HepG2 (cell line): ENCODE measurements at regions of chr3 and their contacts with region 1.

Region 1: GRCh38 chr3:101803173-101803782 is 24.3 kb downstream of the NXPE3 start:
- DNase-seq: peak; percentile 74
- ATAC-seq: peak; percentile 98
- H3K4me3 ChIP-seq: no peak overlapping the region
- H3K27ac ChIP-seq: no peak overlapping the region
- H3K4me1 ChIP-seq: peaks cover 27% of the 10 kb centered on the region
- H3K27me3 ChIP-seq: no peaks in the 10 kb centered on the region
- CTCF ChIP-seq: peak; percentile 73
- EP300 ChIP-seq: no peak
- POLR2A ChIP-seq: no peak
- RAD21 ChIP-seq: peak; percentile 44; the same call in 1 of the 2 replicates

Region 2: GRCh38 chr3:101695779-101696372 is 107.4 kb before region 1 on chr3:
- CTCF ChIA-PET with region 1: no interaction called
- POLR2A ChIA-PET with region 1: no interaction called
- in situ Hi-C with region 1: no loop called
- intact Hi-C with region 1: loop called (anchors 1 kb)
- DNase-seq: peak; percentile 67
- ATAC-seq: no peak
- H3K4me3 ChIP-seq: no peak overlapping the region
- H3K27ac ChIP-seq: no peak overlapping the region
- H3K4me1 ChIP-seq: 0 out of 2 replicates have a peak, but pooled peaks cover 5% of the 10 kb centered on the region
- H3K27me3 ChIP-seq: no peaks in the 10 kb centered on the region
- CTCF ChIP-seq: peak; percentile 61
- EP300 ChIP-seq: no peak
- POLR2A ChIP-seq: no peak
- RAD21 ChIP-seq: no peak

Region 3: GRCh38 chr3:101791778-101792177 is 11.5 kb before region 1 on chr3:
- CTCF ChIA-PET with region 1: no interaction called
- POLR2A ChIA-PET with region 1: no interaction called
- in situ Hi-C with region 1: no loop called
- intact Hi-C with region 1: no loop called
- DNase-seq: no peak
- ATAC-seq: no peak
- H3K4me3 ChIP-seq: no peak overlapping the region
- H3K27ac ChIP-seq: no peak overlapping the region
- H3K4me1 ChIP-seq: peaks cover 5% of the 10 kb centered on the region; the same call in 1 of the 2 replicates
- H3K27me3 ChIP-seq: no peaks in the 10 kb centered on the region
- CTCF ChIP-seq: no peak
- EP300 ChIP-seq: no peak
- POLR2A ChIP-seq: no peak
- RAD21 ChIP-seq: no peak

Region 4: GRCh38 chr3:101898752-101899169 is 95.5 kb after region 1 on chr3:
- CTCF ChIA-PET with region 1: no interaction called
- POLR2A ChIA-PET with region 1: no interaction called
- in situ Hi-C with region 1: no loop called
- intact Hi-C with region 1: no loop called
- DNase-seq: no peak
- ATAC-seq: no peak
- H3K4me3 ChIP-seq: no peak overlapping the region
- H3K27ac ChIP-seq: no peak overlapping the region
- H3K4me1 ChIP-seq: no peaks in the 10 kb centered on the region
- H3K27me3 ChIP-seq: no peaks in the 10 kb centered on the region
- CTCF ChIP-seq: no peak
- EP300 ChIP-seq: no peak
- POLR2A ChIP-seq: no peak
- RAD21 ChIP-seq: no peak

Region 5: GRCh38 chr3:101995371-101996046 is 192.2 kb after region 1 on chr3:
- CTCF ChIA-PET with region 1: no interaction called
- POLR2A ChIA-PET with region 1: no interaction called
- in situ Hi-C with region 1: no loop called
- intact Hi-C with region 1: loop called (anchors 10 kb)
- DNase-seq: no peak
- ATAC-seq: no peak
- H3K4me3 ChIP-seq: no peak overlapping the region
- H3K27ac ChIP-seq: no peak overlapping the region
- H3K4me1 ChIP-seq: no peaks in the 10 kb centered on the region
- H3K27me3 ChIP-seq: no peaks in the 10 kb centered on the region
- CTCF ChIP-seq: no peak
- EP300 ChIP-seq: no peak
- POLR2A ChIP-seq: no peak
- RAD21 ChIP-seq: no peak

Region 6: GRCh38 chr3:102529452-102529851 is 726.2 kb after region 1 on chr3:
- CTCF ChIA-PET with region 1: no interaction called
- POLR2A ChIA-PET with region 1: no interaction called
- in situ Hi-C with region 1: loop called (anchors 10 kb)
- intact Hi-C with region 1: loop called (anchors 2 kb)
- DNase-seq: no peak
- ATAC-seq: peak; percentile 62; the same call in 2 of the 3 replicates
- H3K4me3 ChIP-seq: no peak overlapping the region
- H3K27ac ChIP-seq: no peak overlapping the region
- H3K4me1 ChIP-seq: no peaks in the 10 kb centered on the region
- H3K27me3 ChIP-seq: no peaks in the 10 kb centered on the region
- CTCF ChIP-seq: 0 out of 2 replicates have a peak, but pooled peaks have one; percentile 19
- EP300 ChIP-seq: no peak
- POLR2A ChIP-seq: no peak
- RAD21 ChIP-seq: no peak

Region 7: GRCh38 chr3:102536456-102536855 is 733.2 kb after region 1 on chr3:
- CTCF ChIA-PET with region 1: no interaction called
- POLR2A ChIA-PET with region 1: no interaction called
- in situ Hi-C with region 1: loop called (anchors 10 kb)
- intact Hi-C with region 1: loop called (anchors 1 kb)
- DNase-seq: peak; percentile 16
- ATAC-seq: peak; percentile 68
- H3K4me3 ChIP-seq: no peak overlapping the region
- H3K27ac ChIP-seq: no peak overlapping the region
- H3K4me1 ChIP-seq: no peaks in the 10 kb centered on the region
- H3K27me3 ChIP-seq: no peaks in the 10 kb centered on the region
- CTCF ChIP-seq: peak; percentile 47
- EP300 ChIP-seq: no peak
- POLR2A ChIP-seq: no peak
- RAD21 ChIP-seq: no peak